Psoas muscle (tissue), 8 donors: ENCODE measurements at regions of chr18 and their contacts with region 1.

Region 1: DNA sequence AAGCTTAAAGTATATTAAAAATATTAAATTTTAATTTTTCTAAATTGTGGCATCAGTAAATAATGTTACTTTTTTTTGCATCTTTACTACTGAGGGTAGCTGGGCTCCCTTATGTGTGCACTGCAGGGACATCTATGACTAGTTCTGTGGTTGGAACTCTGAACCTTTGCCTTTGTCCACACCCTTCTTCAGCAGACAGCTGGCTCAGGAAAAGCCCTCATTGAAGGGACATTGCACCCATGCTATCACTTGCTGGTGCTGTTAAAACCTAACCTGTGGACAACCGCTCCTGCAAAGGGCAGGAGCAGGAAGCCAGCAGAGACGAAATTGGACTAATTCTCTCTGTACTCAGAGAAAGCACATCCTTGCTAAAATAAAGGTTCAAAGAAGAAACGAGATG is 30.1 kb downstream of the MOCOS start:
- DNase-seq: no peak
- ATAC-seq: no peak
- H3K4me3 ChIP-seq: no peak overlapping the region
- H3K27ac ChIP-seq: no peak overlapping the region
- H3K4me1 ChIP-seq: no peaks in the 10 kb centered on the region
- H3K27me3 ChIP-seq: no peaks in the 10 kb centered on the region
- CTCF ChIP-seq: no peak

Region 2: DNA sequence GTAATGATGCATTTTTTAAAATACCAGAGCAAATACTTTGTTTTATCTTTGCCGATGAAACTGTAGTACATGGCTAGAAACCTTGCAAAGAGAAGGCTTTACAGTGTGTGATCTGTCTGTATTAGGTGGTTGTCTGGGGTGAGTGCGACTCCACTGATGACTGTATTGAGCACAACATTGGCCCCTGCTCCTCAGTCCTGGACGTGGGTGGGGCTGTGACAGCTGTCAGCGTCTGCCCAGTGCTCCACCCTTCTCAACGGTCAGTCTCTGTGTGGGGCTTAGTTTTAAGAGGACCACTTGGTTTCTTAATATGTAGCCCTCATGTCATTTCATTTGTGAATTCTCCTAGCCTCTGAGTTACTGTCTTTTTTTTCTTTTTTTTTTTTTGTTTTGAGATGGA is 47.4 kb before region 1 on chr18:
- intact Hi-C with region 1: loop called in 1 of 2 experiments (anchors 2 kb)
- DNase-seq: no peak
- ATAC-seq: no peak
- H3K4me3 ChIP-seq: no peak overlapping the region
- H3K27ac ChIP-seq: no peak overlapping the region
- H3K4me1 ChIP-seq: no peaks in the 10 kb centered on the region
- H3K27me3 ChIP-seq: no peaks in the 10 kb centered on the region
- CTCF ChIP-seq: no peak

Region 3: DNA sequence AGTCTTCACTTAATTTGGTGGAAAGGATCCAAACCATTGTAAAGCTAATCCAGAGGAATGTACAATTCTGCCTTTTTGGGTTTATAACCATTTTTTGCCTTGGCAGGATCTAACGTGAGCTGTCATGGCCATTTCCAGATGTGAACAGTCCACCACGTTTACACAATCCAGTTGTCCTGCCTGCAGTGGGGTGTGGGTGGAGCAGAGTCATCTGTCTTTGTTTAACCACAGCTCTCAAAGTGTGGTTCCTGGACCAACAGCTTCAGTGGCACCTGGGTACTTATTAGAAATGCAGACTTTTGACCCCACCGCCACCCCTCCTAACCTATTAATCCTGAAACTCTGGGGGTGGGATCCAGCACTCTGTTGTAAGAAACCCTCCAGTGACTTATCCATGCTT is 116.1 kb after region 1 on chr18:
- intact Hi-C with region 1: no loop called
- DNase-seq: no peak
- ATAC-seq: no peak
- H3K4me3 ChIP-seq: no peak overlapping the region
- H3K27ac ChIP-seq: no peak overlapping the region
- H3K4me1 ChIP-seq: peaks cover 15% of the 10 kb centered on the region
- H3K27me3 ChIP-seq: no peaks in the 10 kb centered on the region
- CTCF ChIP-seq: no peak